Heart right ventricle (tissue), 16 donors: ENCODE measurements at regions of chr2 and their contacts with region 1.

Region 1: GRCh38 chr2:151619337-151619989 is 114.8 kb downstream of the NEB start:
- DNase-seq: no peak
- ATAC-seq: peak in 2 of 8 donors; percentile 27 to 73
- H3K4me3 ChIP-seq: no peak overlapping the region
- H3K27ac ChIP-seq: no peak overlapping the region
- H3K4me1 ChIP-seq: peaks cover 0 to 11% (median 0%) of the 10 kb centered on the region in 9 donors
- H3K27me3 ChIP-seq: no peaks in the 10 kb centered on the region
- CTCF ChIP-seq: no peak

Region 2: DNA sequence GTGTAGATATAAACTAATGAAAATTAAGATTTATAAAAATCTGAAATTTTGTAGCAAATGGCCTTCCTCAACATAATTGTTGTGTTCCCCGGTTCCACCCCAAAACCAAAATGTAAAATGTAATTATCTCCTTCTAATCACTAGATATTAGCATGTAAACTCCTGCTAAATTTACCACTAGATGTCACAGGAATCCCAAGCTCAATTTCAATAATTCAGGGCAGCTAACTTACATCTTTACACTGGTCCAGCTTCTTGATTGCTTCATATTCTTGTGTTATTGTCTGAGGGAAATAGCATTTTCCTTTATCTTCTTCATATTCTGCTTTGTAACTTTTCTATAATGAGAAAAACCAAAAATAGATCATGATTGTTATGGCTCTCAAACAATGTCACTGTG is 72.2 kb after region 1 on chr2:
- intact Hi-C with region 1: no loop called
- DNase-seq: no peak
- ATAC-seq: no peak
- H3K4me3 ChIP-seq: no peak overlapping the region
- H3K27ac ChIP-seq: no peak overlapping the region
- H3K4me1 ChIP-seq: no peaks in the 10 kb centered on the region
- H3K27me3 ChIP-seq: no peaks in the 10 kb centered on the region
- CTCF ChIP-seq: peak in 4 of 9 donors; percentile 10 to 40 (median 31)

Region 3: GRCh38 chr2:152025678-152026287 is 406.3 kb after region 1 on chr2:
- intact Hi-C with region 1: loop called in 5 of 10 experiments (anchors 5 to 10 kb)
- DNase-seq: peak; percentile 78 to 83
- ATAC-seq: peak; percentile 89 to 98 (median 96)
- H3K4me3 ChIP-seq: peak overlapping the region in 6 of 10 donors; percentile 38 to 51 (median 43)
- H3K27ac ChIP-seq: no peak overlapping the region
- H3K4me1 ChIP-seq: peaks cover 0 to 7% (median 0%) of the 10 kb centered on the region in 9 donors
- H3K27me3 ChIP-seq: no peaks in the 10 kb centered on the region
- CTCF ChIP-seq: peak; percentile 86 to 98 (median 92)